ENCODE measurements at regions of chr7 and their contacts with region 1.

Region 1: GRCh38 chr7:48109848-48110663 is 21.0 kb downstream of the UPP1 start:
- DNase-seq: no peak
- H3K4me3 ChIP-seq: no peak overlapping the region
- H3K27me3 ChIP-seq: no peaks in the 10 kb centered on the region
- CTCF ChIP-seq: peak; percentile 99

Region 2: GRCh38 chr7:47945261-47946001 is 164.6 kb before region 1 on chr7:
- CTCF ChIA-PET with region 1: interaction called, 45 read pairs
- POLR2A ChIA-PET with region 1: no interaction called
- DNase-seq: no peak
- H3K4me3 ChIP-seq: no peak overlapping the region
- H3K27me3 ChIP-seq: no peaks in the 10 kb centered on the region
- CTCF ChIP-seq: peak; percentile 76

Region 3: GRCh38 chr7:47991741-47992311 is 118.2 kb before region 1 on chr7:
- CTCF ChIA-PET with region 1: interaction called, 112 read pairs
- POLR2A ChIA-PET with region 1: no interaction called
- DNase-seq: no peak
- H3K4me3 ChIP-seq: peak overlapping the region; percentile 54
- H3K27me3 ChIP-seq: no peaks in the 10 kb centered on the region
- CTCF ChIP-seq: peak; percentile 83

Region 4: GRCh38 chr7:48035967-48036478 is 74.0 kb before region 1 on chr7:
- CTCF ChIA-PET with region 1: interaction called, 11 read pairs
- POLR2A ChIA-PET with region 1: no interaction called
- DNase-seq: no peak
- H3K4me3 ChIP-seq: peak overlapping the region; percentile 58
- H3K27me3 ChIP-seq: peaks cover 8% of the 10 kb centered on the region
- CTCF ChIP-seq: no peak

Region 5: DNA sequence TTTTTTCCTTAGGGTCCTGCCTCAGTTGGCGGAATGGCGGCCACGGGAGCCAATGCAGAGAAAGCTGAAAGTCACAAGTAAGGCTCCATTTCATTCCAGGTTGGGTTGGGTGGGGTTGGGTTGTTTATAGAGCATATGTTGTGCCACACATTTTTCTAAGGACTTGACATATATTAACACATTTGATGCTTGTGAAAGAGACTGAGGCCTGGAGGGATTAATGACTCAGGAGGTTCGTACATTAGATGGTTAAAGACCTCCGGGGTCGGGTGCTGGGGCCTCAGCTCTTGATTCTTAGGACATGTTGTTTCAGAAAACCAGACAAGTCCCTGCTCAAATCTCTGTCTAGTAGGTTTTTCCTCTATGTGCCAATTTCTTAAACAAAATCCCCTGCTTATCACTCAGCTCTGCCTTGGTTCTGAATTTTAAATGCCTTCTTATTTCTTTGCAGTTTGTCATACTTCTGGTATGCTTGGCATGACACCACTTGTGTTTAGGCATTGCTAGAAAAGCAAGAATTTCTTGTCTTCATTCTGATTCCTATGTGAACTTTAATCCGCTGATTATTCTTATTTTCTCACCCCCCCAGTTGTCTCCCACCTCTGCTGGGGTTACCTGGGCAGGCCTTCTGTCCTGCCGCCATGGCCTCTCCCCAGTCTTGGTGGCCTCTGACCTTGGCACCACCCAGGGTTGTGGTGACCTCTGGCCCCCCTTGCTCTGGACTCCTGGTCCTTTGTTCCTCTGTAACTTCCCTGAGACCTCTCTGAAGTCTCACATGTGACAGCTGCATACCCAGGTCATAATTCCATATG is 15.1 kb before region 1 on chr7:
- CTCF ChIA-PET with region 1: interaction called, 43 read pairs
- POLR2A ChIA-PET with region 1: no interaction called
- DNase-seq: no peak
- H3K4me3 ChIP-seq: no peak overlapping the region
- H3K27me3 ChIP-seq: no peaks in the 10 kb centered on the region
- CTCF ChIP-seq: no peak

Region 6: DNA sequence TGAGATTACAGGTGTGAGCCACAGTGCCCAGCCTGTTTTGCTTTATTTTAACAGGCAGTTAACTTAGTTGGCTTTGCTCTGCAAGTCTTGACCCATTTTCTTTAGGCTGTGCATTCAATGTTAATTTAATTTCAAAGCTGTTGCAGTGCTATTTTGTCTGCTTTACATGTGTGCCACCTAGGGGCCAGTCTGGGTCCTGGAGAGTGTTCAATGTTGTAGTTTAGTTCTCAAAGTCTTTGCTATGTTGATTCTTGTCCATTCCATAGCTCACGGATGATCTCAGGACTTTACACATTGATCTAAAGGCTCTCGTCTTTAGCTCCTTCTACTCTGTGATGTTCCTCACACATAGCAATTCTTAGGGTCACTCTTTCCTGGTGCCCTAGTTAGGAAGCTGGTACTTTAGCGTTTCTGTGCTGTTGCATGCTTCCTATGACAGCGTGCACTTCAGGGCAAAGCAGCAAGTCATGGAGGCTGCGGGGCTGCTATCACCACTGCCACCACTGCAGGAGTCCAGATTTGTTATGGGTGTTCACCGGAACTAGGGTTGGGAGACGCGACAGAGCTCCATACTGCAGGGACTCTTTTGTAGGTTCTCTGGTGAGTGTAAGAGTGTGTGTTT is 44.8 kb after region 1 on chr7:
- CTCF ChIA-PET with region 1: interaction called, 17 read pairs
- POLR2A ChIA-PET with region 1: no interaction called
- DNase-seq: no peak
- H3K4me3 ChIP-seq: no peak overlapping the region
- H3K27me3 ChIP-seq: no peaks in the 10 kb centered on the region
- CTCF ChIP-seq: peak; percentile 87

Measured in BJ (cell line).